Activated T-helper 1 cell treated with anti-CD3 and anti-CD28 coated beads, Interleukin-12 subunit alpha, Interleukin-12 subunit beta, Interleukin-2, Interleukin-4 antibody, amounts not matched to agents 30 ng/mL and 10 ng/mL and 1 ng/mL, durations not matched to agents 14 hours and 24 hours and 36 hours (primary cell): ENCODE measurements at regions of chr2 and their contacts with region 1.

Region 1: DNA sequence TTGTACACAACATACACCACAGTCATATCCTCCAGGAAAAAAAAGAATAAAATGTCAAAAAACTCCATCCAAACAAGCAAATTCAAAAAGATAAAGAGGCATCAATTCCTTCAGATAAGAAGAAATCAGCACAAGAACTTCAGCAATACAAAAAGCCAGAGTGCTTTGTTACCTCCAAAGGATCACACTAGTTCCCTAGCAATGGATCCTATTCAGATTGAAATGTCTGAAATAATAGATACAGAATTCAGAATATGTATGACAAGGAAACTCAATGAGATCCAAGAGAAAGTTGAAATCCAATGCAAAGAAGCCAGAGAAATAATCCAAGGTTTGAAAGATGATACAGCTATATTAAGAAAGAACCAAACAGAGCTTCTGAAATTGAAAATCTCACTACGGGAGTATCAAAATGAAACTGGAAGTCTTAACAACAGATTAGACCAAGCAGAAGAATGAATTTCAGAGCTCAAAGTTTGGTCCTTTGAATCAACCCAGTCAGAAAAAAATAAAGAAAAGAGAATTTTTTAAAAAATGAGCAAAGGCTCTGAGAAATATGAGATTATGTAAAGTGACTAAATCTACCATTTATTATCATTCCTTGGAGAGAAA is 80.6 kb downstream of the TRABD2A start:
- DNase-seq: no peak
- H3K4me3 Mint-ChIP-seq: peak overlapping the region; percentile 7
- H3K27ac Mint-ChIP-seq: no peak overlapping the region
- H3K4me1 Mint-ChIP-seq: peaks cover 11% of the 10 kb centered on the region
- H3K27me3 Mint-ChIP-seq: no peaks in the 10 kb centered on the region

Region 2: DNA sequence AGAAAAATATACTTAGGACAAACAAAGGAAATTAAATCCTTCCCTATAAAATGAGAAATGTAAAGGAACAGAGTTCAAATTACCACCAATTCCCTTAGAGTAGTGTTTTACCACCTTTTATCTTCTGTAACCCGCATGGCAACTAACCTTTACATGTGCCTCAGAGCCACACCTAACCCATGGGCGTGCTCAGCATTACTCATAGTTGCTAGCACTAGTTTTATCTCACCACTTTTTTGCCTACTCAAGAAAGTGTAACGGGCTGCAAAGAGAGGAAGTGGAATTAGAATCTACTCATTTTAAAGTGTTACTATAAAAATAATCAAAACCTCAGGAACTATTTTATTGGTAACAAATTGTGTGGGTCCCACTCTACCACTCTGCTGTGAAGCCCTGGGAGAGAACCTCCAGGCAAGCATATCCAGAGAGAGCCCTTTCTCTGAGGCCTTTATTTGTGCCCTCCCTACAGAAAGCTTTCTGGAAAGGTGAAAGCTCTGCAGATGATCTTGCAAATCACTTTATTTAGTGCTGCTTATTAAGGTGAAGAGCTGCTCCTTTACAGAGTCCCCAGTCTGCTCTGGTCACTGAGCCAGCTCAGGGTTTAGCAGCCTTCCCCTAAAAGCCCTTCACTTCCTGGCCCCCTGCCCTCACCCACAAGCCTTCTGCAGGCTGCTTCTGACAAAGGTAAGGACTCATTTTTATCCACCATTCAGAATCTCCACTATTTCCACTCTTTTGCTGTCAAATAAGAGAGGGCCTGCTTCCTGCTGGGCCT is 18.2 kb before region 1 on chr2:
- intact Hi-C with region 1: loop called (anchors 2 kb)
- DNase-seq: peak; percentile 44
- H3K4me3 Mint-ChIP-seq: no peak overlapping the region
- H3K27ac Mint-ChIP-seq: peak overlapping the region; percentile 85
- H3K4me1 Mint-ChIP-seq: peaks cover 69% of the 10 kb centered on the region
- H3K27me3 Mint-ChIP-seq: no peaks in the 10 kb centered on the region

Region 3: DNA sequence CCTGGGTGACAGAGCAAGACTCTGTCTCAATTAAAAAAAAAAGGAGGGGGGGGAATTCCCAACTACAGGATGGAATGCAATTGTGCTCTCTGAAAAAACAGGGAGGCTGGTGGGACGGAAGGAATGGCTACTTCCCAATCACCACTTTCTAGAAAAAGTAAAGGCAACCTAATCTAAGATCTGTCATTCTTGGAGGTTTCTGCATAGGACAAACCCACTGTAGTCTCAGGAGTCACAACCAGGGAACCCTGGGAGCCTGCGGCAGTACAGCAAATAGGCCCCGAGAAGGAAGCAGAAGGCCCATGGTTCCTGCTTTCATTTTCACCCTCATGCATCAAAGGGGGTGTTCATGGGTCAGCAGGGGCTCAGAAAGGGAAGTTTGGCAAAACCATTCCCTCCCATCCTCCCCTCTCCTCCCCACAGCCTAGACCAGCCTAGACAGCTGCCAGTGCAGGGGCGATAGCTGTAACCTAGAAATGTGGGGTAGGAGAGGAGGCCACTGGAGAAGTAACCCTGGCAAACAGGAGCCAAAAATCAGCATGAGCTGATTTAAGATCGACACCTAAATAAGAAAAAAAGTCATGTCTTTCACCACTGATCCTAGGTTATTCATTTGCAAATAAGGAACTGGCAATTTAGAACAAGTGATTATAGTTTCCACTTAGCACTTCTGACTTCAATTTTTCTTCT is 32.6 kb after region 1 on chr2:
- intact Hi-C with region 1: loop called (anchors 2 kb)
- DNase-seq: peak; percentile 27
- H3K4me3 Mint-ChIP-seq: peak overlapping the region; percentile 31
- H3K27ac Mint-ChIP-seq: peak overlapping the region; percentile 77
- H3K4me1 Mint-ChIP-seq: peaks cover 24% of the 10 kb centered on the region
- H3K27me3 Mint-ChIP-seq: no peaks in the 10 kb centered on the region

Region 4: DNA sequence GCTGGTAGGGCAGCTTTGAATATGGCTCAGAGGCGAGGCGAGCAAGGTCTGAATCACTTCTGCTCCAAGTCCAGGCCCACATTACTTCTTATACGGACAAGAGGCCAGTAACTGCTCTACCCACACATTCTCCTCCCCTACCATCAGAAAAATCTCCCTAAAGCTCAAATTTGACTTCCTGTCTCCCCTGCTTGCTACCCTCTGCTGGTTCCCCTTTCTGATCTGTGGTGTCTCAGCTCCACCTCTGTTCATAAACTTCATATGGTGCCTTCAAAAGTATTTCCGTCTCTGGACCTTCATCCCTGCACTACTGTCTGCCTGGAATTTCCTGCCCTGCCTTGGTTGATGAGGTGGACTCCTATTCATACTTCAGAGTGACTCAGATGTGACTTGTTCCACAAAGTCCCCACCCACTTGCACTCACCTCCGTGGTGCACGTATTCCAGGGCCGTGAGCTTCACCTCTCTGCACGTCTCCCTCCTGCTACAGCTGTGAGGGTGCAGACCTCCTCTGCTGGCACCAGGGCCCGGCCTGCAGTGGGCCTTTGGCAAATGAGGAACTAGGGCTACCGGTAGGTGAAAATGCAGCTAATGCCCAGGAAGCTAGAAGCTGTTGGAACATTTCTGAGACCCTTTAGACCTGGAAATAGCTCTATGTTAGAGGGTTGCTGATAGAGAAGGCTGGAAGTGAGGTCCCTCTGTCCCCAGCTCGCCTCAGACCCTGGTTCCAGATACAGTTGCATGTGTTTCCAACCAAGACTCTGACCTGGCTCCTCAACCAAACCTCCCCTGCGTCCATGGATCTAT is 146.1 kb after region 1 on chr2:
- intact Hi-C with region 1: no loop called
- DNase-seq: peak; percentile 63
- H3K4me3 Mint-ChIP-seq: peak overlapping the region; percentile 43
- H3K27ac Mint-ChIP-seq: peak overlapping the region; percentile 91
- H3K4me1 Mint-ChIP-seq: peaks cover 40% of the 10 kb centered on the region
- H3K27me3 Mint-ChIP-seq: no peaks in the 10 kb centered on the region